Right cardiac atrium (tissue), 5 donors: ENCODE measurements at regions of chr2 and their contacts with region 1.

Region 1: DNA sequence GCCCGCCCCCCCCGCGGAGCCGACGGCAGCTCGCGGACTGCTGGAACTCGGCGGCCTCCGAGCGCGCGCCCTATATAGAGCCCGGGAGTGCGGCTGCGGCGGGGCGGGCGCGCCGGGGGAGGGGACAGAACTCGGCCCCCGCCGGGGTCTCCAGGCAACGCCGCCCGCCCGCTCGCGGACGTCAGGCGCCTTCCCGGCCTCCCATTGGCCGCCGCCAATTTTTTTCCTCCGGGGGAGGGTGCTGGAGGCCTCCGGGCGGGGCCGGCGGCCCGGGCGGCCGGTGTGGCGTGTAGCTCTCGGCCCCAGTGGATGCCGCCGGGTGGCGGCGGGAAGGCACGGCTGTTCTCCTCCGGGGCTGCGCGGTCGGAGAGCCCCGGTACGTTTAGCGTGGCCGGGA is at the start of gene ZFP36L2:
- DNase-seq: peak; percentile 97 to 99 (median 99)
- ATAC-seq: peak; percentile 88 to 89
- H3K4me3 ChIP-seq: peak within 1 kb of the TSS; percentile 95
- H3K27ac ChIP-seq: peak within 1 kb of the TSS; percentile 99
- H3K4me1 ChIP-seq: peaks cover 4% of the 10 kb centered on the region
- H3K27me3 ChIP-seq: no peaks in the 10 kb centered on the region
- total RNA-seq, gene ZFP36L2: 62.1 to 73.0 (median 68.1) TPM

Region 2: DNA sequence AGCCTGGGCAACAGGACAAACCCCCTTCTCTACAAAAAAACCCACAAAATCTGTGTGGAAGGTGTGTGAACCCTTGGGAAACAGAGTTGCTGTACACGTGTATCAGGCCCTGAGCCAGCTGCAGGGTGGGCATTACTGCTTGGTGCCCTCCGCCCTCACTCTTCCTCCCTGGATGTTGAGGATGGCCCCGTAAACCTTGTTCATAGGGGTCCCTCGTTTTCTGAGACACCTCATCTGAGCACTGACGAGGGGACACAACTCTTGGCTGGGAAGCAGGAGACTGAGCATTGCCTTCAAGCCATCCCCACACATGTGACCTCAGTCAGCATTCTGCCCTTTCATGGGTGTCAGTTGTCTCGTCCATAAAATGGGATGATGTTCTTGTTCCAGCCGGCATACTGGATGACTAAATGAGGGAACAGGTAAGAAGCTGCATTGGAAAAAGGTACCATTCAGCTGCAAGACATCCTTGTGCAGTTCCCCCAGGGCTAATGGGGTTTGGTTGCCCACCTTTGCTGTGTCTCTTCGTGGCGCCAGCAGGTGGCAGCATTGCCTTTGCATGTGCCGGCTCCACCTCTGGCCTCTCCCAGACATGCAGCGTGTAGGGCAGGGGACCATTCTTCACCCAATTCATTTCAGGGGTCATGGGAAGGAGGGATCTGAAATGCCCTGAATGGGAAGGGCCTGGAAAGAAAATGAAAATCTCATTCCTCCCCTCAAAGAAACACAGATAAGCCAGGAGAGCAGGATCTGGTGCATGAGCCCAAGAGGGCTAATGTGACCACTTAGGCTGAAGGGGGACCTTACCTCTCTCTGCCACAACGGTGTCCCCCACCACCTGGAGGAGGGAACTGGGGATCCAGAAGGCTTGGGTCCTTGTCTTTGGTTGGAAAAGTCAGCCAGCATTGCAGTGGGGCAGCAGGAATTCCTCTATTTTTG is 397.8 kb before region 1 on chr2:
- intact Hi-C with region 1: loop called (anchors 2 to 10 kb)
- DNase-seq: peak; percentile 79 to 91 (median 91)
- ATAC-seq: peak; percentile 90 to 93
- H3K4me3 ChIP-seq: no peak overlapping the region
- H3K27ac ChIP-seq: no peak overlapping the region
- H3K4me1 ChIP-seq: no peaks in the 10 kb centered on the region
- H3K27me3 ChIP-seq: no peaks in the 10 kb centered on the region

Region 3: GRCh38 chr2:42944779-42945415 is 281.7 kb before region 1 on chr2:
- intact Hi-C with region 1: loop called in 1 of 4 experiments (anchors 10 kb)
- DNase-seq: peak in 1 of 3 donors; percentile 45
- ATAC-seq: no peak
- H3K4me3 ChIP-seq: no peak overlapping the region
- H3K27ac ChIP-seq: no peak overlapping the region
- H3K4me1 ChIP-seq: no peaks in the 10 kb centered on the region
- H3K27me3 ChIP-seq: no peaks in the 10 kb centered on the region

Region 4: DNA sequence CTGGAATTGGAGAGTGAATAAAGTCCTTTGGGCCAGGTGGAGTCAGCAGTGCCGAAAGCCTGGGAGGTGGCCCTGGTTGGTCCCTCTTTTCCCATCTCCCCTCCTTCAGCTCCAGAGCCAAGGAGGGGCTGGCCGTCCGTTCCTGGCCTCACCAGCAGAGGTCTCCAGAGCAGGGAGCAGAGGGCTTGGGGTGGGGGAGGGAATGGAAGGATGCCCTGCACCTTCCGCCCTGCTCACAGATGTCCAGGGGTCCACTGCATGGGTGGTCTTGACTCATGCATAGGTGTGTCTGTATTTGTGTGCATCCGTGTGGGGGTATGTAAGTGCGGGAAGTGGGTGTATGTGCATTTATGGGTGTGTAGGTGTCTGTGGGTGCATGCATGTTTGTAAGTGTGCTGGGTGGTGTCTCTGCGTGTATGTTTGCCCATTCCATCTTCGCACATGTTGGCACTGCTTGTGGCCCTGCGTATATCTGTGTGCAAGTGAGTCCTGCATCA is 202.0 kb before region 1 on chr2:
- intact Hi-C with region 1: loop called in 2 of 4 experiments (anchors 5 kb)
- DNase-seq: peak; percentile 67 to 91 (median 86)
- ATAC-seq: peak; percentile 73 to 74
- H3K4me3 ChIP-seq: no peak overlapping the region
- H3K27ac ChIP-seq: no peak overlapping the region
- H3K4me1 ChIP-seq: peaks cover 6% of the 10 kb centered on the region
- H3K27me3 ChIP-seq: no peaks in the 10 kb centered on the region

Region 5: DNA sequence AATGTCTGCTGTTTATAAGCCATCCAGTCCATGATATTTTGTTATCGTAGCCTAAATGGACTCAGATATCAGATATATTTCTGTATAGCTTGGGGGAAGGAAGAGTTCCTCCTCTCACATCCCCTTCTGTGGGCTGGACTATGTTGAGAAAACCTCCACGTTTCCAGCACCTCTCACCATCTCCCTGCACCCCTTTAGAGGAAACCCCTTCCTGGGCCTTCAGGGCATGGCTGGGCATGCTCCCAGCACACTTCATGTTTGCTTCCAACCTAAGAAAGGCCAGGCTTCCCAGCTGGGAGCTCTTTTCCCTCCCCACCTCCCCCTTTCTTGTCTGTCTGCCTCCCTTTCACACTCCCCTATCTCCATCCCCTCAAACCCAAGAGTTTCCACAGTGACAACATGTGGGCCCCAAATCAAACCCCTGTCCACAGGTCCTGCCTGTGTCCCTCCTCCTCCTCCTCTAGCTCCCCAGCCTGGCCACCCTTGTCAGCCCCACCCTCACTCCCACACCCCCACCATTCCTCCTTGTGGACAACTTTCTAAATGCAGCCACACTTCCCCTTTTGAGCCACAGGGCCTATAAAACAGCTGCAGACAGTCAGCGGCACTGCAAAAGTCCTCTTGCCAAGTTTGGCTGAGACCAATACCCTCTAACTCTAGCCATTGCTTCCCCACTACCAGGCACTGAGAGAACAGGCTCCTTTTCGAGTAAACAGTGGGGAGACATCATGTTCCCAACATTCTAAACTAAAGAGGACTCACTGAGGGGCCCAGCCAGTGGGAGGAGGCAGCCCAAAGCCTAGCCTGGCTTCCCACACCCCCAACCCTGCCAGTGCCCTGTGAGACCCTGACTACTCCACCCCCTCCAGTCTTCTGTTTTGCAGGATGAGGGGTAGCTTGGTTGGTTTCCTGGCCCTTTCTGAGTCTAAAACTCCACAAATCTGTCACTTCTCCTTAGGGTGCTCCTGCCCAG is 120.7 kb before region 1 on chr2:
- intact Hi-C with region 1: loop called in 1 of 4 experiments (anchors 10 kb)
- DNase-seq: peak; percentile 78 to 89 (median 87)
- ATAC-seq: peak; percentile 59 to 64
- H3K4me3 ChIP-seq: no peak overlapping the region
- H3K27ac ChIP-seq: peak overlapping the region; percentile 87
- H3K4me1 ChIP-seq: peaks cover 25% of the 10 kb centered on the region
- H3K27me3 ChIP-seq: no peaks in the 10 kb centered on the region

Region 6: DNA sequence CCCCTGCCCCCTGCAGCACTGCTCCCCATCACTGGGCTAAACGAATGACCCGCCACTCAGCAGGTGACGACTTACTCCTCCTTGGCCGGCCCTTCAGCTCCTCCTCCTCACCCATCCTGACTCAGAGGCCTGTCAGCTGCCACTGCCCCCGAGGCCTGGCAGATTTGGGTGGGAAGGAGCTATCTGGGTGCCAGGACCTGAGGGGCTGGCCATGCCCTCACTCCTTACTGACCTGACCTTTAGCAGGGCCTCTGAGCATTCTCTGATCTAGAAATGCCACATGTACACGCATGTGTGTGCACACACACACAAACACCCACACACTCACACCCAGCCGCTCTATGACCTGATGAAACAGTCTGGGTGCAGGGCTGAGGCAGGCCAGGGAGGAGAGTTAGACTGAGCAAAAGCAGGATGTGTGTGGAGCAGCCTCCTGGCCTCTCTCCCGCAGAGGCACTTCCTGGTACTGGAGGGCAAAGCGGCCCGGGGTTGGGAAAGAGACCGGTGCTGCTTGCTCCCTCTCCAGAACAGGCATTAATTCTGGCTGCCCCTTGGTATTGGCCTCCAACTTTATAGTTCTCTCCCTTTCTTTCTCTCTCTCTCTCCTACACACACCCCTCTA is 68.2 kb before region 1 on chr2:
- intact Hi-C with region 1: loop called in 1 of 4 experiments (anchors 5 kb)
- DNase-seq: peak; percentile 69 to 88 (median 86)
- ATAC-seq: peak; percentile 60 to 66
- H3K4me3 ChIP-seq: no peak overlapping the region
- H3K27ac ChIP-seq: peak overlapping the region; percentile 82
- H3K4me1 ChIP-seq: peaks cover 14% of the 10 kb centered on the region
- H3K27me3 ChIP-seq: no peaks in the 10 kb centered on the region

Region 7: DNA sequence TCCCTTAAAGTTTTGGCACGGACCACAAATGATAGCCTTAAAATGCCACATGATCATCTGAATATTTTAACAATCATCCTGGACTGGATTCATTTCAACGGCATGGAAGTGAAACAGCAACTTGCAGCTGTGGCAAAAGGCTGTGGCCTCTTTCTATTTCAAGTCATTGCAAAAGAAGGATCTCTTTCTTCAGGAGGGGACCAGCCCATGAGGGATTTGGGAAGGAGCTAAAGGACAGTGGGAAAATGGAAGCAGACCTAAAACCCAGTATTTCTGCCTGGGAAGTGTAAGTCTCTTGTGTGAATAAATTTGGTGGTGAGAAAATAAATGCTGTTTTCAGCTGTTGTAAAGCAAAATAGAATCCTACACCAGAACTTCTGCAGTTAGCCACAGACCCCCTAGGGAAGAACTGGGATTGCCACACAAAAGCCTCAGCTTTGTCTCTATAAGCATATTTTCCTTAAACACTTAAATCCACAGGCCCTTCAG is 107.1 kb after region 1 on chr2:
- intact Hi-C with region 1: no loop called
- DNase-seq: peak in 1 of 3 donors; percentile 41
- ATAC-seq: peak; percentile 50 to 53
- H3K4me3 ChIP-seq: peak overlapping the region; percentile 13
- H3K27ac ChIP-seq: peak overlapping the region; percentile 97
- H3K4me1 ChIP-seq: peaks cover 13% of the 10 kb centered on the region
- H3K27me3 ChIP-seq: no peaks in the 10 kb centered on the region

Region 8: DNA sequence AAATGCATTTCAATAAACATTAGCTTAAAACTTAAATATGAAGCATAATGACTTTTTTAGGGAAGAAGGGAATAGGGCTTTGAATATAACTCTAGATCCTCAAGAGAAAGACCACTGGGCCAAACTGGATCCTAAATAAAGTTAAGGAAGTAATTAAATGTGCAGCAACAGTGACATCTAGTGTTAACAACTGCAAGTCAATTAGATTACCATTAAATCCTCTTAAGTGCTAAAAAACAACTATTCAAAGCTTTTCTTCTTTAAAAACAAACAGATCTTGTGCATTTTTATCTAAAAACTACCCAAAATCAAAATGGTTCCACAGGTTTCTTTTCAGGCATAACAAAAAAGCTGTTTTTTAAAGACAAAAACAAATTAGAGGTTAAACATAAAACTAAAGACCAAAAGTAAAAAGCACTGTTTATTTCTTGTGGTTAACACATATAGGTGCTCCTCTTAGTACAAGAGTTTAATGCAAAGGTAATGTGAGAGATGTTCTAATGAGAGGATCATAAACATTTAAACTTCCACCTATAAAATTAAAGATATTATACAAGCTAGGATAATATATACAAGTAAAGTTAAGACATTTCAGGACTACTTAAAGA is 257.9 kb after region 1 on chr2:
- intact Hi-C with region 1: loop called (anchors 2 to 10 kb)
- DNase-seq: no peak
- ATAC-seq: peak; percentile 68 to 71
- H3K4me3 ChIP-seq: no peak overlapping the region
- H3K27ac ChIP-seq: no peak overlapping the region
- H3K4me1 ChIP-seq: no peaks in the 10 kb centered on the region
- H3K27me3 ChIP-seq: no peaks in the 10 kb centered on the region